ENCODE measurements at regions of chr17 and their contacts with region 1.

Region 1: GRCh38 chr17:59619293-59620063 is at the start of gene CLTC:
- DNase-seq: peak; percentile 97
- ATAC-seq: peak; percentile 84
- H3K4me3 Mint-ChIP-seq: peak within 1 kb of the TSS; percentile 98
- H3K27ac Mint-ChIP-seq: peak within 1 kb of the TSS; percentile 98
- H3K4me1 Mint-ChIP-seq: peaks cover 45% of the 10 kb centered on the region
- H3K27me3 Mint-ChIP-seq: no peaks in the 10 kb centered on the region
- CTCF ChIP-seq: no peak
- total RNA-seq, gene CLTC: 137 to 142 TPM

Region 2: GRCh38 chr17:59565171-59565969 is 54.1 kb before region 1 on chr17 and contains the start of gene DHX40:
- CTCF ChIA-PET with region 1: no interaction called
- POLR2A ChIA-PET with region 1: interaction called, 14 read pairs
- intact Hi-C with region 1: no loop called
- DNase-seq: peak; percentile 99
- ATAC-seq: peak; percentile 91
- H3K4me3 Mint-ChIP-seq: peak within 1 kb of the TSS; percentile 100
- H3K27ac Mint-ChIP-seq: peak within 1 kb of the TSS; percentile 100
- H3K4me1 Mint-ChIP-seq: peaks cover 23% of the 10 kb centered on the region
- H3K27me3 Mint-ChIP-seq: no peaks in the 10 kb centered on the region
- CTCF ChIP-seq: no peak
- total RNA-seq, gene DHX40: 24.7 to 24.9 TPM

Region 3: DNA sequence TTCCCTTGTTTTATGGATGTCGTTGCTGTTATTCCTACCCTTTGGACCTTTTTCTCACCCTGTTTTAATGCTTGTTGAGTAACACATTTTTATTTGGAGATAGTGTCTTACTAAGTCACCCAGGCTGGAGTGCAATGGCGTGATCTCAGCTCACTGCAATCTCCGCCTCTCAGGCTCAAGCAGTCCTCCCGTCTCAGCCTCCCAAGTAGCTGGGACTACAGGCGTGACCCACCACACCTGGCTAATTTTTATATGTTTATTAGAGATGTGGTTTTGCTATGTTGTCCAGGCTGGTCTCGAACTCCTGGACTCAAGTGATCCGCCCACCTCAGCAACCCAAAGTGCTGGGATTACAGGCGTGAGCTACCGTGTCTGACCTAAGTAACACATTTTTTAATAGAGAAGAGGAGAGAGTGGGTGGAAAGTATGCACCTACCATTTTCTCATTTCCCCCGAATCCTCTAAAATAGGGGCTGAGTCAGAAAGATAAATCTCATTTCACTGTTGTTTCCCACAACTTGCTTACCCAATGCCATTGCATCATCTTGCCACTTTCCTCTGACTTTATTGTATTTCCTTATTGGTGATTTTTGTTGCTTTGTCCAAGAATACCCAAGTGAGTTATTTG is 47.1 kb before region 1 on chr17:
- CTCF ChIA-PET with region 1: interaction called, 4 read pairs
- POLR2A ChIA-PET with region 1: interaction called, 14 read pairs
- intact Hi-C with region 1: no loop called
- DNase-seq: peak; percentile 53
- ATAC-seq: peak; percentile 86
- H3K4me3 Mint-ChIP-seq: no peak overlapping the region
- H3K27ac Mint-ChIP-seq: peak overlapping the region; percentile 91
- H3K4me1 Mint-ChIP-seq: peaks cover 17% of the 10 kb centered on the region
- H3K27me3 Mint-ChIP-seq: no peaks in the 10 kb centered on the region
- CTCF ChIP-seq: no peak

Region 4: GRCh38 chr17:59641799-59642489 is 22.5 kb after region 1 on chr17:
- CTCF ChIA-PET with region 1: interaction called, 4 read pairs
- POLR2A ChIA-PET with region 1: interaction called, 10 read pairs
- intact Hi-C with region 1: no loop called
- DNase-seq: no peak
- ATAC-seq: peak; percentile 89
- H3K4me3 Mint-ChIP-seq: no peak overlapping the region
- H3K27ac Mint-ChIP-seq: peak overlapping the region; percentile 64
- H3K4me1 Mint-ChIP-seq: peaks cover 46% of the 10 kb centered on the region
- H3K27me3 Mint-ChIP-seq: no peaks in the 10 kb centered on the region
- CTCF ChIP-seq: no peak

Region 5: DNA sequence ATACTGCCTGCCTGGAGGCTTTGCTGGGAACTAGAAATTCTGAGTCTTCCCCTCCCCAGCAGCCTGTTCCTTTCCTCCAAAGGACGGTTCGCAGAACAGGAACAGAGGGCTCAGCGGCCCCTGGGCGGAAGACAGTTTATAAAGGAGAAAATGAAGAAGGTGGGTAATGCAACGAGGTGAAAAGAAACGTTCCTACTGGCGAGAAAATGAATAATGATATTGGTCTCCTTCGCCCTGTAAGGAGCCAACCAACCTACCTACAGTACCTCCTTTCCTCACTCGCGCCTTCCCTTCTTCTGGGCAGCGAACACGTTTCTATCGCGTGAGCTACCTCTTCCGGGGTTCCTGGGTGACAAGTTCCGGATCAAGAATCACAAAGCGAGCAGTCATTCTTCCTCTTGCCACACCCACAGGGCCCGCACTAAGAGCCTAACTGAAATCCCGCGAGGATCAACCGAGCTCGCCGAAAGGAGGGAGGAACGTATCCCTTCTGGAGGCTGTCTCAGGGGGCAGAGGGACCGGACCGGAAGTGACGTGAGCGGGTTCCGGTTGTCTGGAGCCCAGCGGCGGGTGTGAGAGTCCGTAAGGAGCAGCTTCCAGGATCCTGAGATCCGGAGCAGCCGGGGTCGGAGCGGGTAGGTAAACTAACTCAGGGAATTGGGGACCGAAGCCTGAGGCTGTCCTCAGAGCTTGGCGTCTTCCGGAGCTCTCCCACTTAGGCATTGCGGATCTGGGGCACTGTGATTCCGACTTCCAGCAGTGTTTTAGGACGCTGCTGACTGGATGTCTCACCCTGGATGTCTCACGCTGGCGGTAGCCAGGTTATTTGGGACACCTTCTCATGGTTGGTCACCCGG is 87.9 kb after region 1 on chr17 and contains the starts of genes PTRH2 and VMP1:
- CTCF ChIA-PET with region 1: no interaction called
- POLR2A ChIA-PET with region 1: interaction called, 11 read pairs
- intact Hi-C with region 1: no loop called
- DNase-seq: peak; percentile 97
- ATAC-seq: peak; percentile 99
- H3K4me3 Mint-ChIP-seq: peak within 1 kb of the TSS; percentile 95
- H3K27ac Mint-ChIP-seq: peak within 1 kb of the TSS; percentile 97
- H3K4me1 Mint-ChIP-seq: peaks cover 46% of the 10 kb centered on the region
- H3K27me3 Mint-ChIP-seq: no peaks in the 10 kb centered on the region
- CTCF ChIP-seq: no peak
- total RNA-seq, gene PTRH2: 34.2 to 37.4 TPM
- total RNA-seq, gene VMP1: 239 to 248 TPM

Measured in activated CD8-positive, alpha-beta T cell treated with anti-CD3 and anti-CD28 coated beads for 36 hours (primary cell).